Calu3 (cell line): ENCODE measurements at regions of chr10 and their contacts with region 1.

Region 1: GRCh38 chr10:127715782-127716378 is 21.1 kb upstream of the FOXI2 start:
- DNase-seq: no peak
- H3K4me3 Mint-ChIP-seq: no peak overlapping the region
- H3K27ac Mint-ChIP-seq: no peak overlapping the region
- H3K4me1 Mint-ChIP-seq: no peaks in the 10 kb centered on the region
- H3K27me3 Mint-ChIP-seq: peaks cover 28% of the 10 kb centered on the region
- CTCF ChIP-seq: no peak

Region 2: GRCh38 chr10:127745861-127746260 is 30.0 kb after region 1 on chr10:
- CTCF ChIA-PET with region 1: no interaction called
- intact Hi-C with region 1: no loop called
- DNase-seq: no peak
- H3K4me3 Mint-ChIP-seq: no peak overlapping the region
- H3K27ac Mint-ChIP-seq: no peak overlapping the region
- H3K4me1 Mint-ChIP-seq: no peaks in the 10 kb centered on the region
- H3K27me3 Mint-ChIP-seq: no peaks in the 10 kb centered on the region
- CTCF ChIP-seq: no peak

Region 3: DNA sequence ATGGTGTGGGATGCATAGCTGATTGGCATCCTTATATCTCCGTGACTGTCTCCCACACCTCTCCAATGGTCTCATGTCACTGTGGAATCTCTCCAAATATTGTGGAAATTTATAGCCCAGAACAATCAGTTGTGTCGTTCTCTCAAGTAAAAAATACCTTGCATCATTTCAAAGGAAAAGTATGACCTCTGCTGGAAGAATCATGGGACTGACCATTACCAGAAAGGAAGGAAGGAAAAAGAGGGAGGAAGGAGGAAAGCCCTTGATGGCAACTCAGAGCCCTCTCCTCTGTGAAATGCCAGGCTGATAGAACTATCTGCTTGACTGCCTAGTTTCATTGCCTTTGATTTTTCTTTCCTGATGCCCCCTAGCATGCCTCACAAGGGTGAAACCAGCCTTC is 97.4 kb after region 1 on chr10:
- CTCF ChIA-PET with region 1: interaction called, 7 read pairs
- intact Hi-C with region 1: loop called (anchors 1 kb)
- DNase-seq: no peak
- H3K4me3 Mint-ChIP-seq: no peak overlapping the region
- H3K27ac Mint-ChIP-seq: no peak overlapping the region
- H3K4me1 Mint-ChIP-seq: no peaks in the 10 kb centered on the region
- H3K27me3 Mint-ChIP-seq: peaks cover 46% of the 10 kb centered on the region
- CTCF ChIP-seq: no peak

Region 4: DNA sequence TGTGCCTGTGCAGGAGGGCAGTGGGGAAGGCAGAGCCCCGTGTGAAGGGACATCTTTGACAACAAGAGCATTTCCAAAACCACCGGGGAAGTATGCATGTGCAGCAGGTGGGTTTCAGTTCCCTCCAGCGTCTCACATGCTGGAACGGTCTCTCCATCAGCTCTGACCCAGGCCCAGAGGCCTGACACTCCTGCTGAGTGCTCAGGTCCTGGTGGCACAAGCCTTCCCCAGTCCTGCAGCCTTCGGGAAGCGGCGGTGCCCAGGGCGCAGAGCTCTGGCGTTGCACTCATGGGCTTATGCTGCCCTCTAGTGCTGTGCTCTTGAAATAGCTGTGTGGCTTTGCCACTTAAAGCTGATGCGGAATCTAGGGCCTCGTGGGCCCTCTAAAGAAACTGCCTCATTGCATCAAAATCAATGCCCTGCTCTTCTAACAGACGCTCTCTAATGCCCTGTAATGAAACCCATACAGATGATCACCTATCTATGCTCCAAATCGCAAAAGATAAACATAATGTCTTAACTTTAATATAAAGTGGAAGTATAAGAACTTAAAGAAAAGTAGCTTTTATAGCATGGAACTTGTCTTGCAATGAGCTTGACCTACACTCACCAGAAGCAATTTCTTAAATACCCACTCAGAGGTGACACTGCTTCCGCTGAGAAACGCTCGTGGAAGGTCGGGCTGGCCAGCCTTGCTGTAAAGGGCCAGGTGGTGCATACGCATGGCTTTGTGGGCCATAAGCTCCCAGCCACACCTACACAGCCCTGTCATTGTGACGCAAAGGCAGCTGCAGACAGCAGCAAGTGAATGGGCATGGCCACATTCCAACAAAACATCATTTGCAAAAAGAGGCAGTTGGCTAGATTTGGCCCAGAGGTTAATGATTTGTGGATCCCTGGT is 138.2 kb after region 1 on chr10:
- CTCF ChIA-PET with region 1: interaction called, 31 read pairs
- intact Hi-C with region 1: loop called (anchors 1 kb)
- DNase-seq: peak; percentile 59
- H3K4me3 Mint-ChIP-seq: no peak overlapping the region
- H3K27ac Mint-ChIP-seq: no peak overlapping the region
- H3K4me1 Mint-ChIP-seq: no peaks in the 10 kb centered on the region
- H3K27me3 Mint-ChIP-seq: peaks cover 44% of the 10 kb centered on the region
- CTCF ChIP-seq: peak; percentile 53